CD8-positive, alpha-beta T cell (primary cell): ENCODE measurements at regions of chr1 and their contacts with region 1.

Region 1: GRCh38 chr1:235971571-235972310 is 93.1 kb downstream of the NID1 start:
- DNase-seq: peak; percentile 81 to 93 (median 89)
- ATAC-seq: peak; percentile 99
- H3K4me3 ChIP-seq: peak overlapping the region; percentile 20 to 46
- H3K4me3 Mint-ChIP-seq: peak overlapping the region; percentile 78
- H3K27ac ChIP-seq: peak overlapping the region; percentile 53 to 54
- H3K27ac Mint-ChIP-seq: peak overlapping the region; percentile 99
- H3K4me1 ChIP-seq: peaks cover 7% of the 10 kb centered on the region
- H3K4me1 Mint-ChIP-seq: peaks cover 16% of the 10 kb centered on the region
- H3K27me3 ChIP-seq: no peaks in the 10 kb centered on the region
- H3K27me3 Mint-ChIP-seq: no peaks in the 10 kb centered on the region
- CTCF ChIP-seq: peak; percentile 82

Region 2: GRCh38 chr1:235739124-235739523 is 232.6 kb before region 1 on chr1:
- CTCF ChIA-PET with region 1: interaction called, 4 read pairs
- POLR2A ChIA-PET with region 1: no interaction called
- intact Hi-C with region 1: loop called in 1 of 2 experiments (anchors 10 kb)
- DNase-seq: no peak
- ATAC-seq: no peak
- H3K4me3 ChIP-seq: no peak overlapping the region
- H3K4me3 Mint-ChIP-seq: no peak overlapping the region
- H3K27ac ChIP-seq: no peak overlapping the region
- H3K27ac Mint-ChIP-seq: no peak overlapping the region
- H3K4me1 ChIP-seq: no peaks in the 10 kb centered on the region
- H3K4me1 Mint-ChIP-seq: peaks cover 2% of the 10 kb centered on the region
- H3K27me3 ChIP-seq: no peaks in the 10 kb centered on the region
- H3K27me3 Mint-ChIP-seq: no peaks in the 10 kb centered on the region
- CTCF ChIP-seq: no peak

Region 3: GRCh38 chr1:235821361-235821981 is 150.3 kb before region 1 on chr1:
- CTCF ChIA-PET with region 1: interaction called, 11 read pairs
- POLR2A ChIA-PET with region 1: no interaction called
- intact Hi-C with region 1: no loop called
- DNase-seq: no peak
- ATAC-seq: no peak
- H3K4me3 ChIP-seq: no peak overlapping the region
- H3K4me3 Mint-ChIP-seq: no peak overlapping the region
- H3K27ac ChIP-seq: no peak overlapping the region
- H3K27ac Mint-ChIP-seq: no peak overlapping the region
- H3K4me1 ChIP-seq: no peaks in the 10 kb centered on the region
- H3K4me1 Mint-ChIP-seq: peaks cover 5% of the 10 kb centered on the region
- H3K27me3 ChIP-seq: no peaks in the 10 kb centered on the region
- H3K27me3 Mint-ChIP-seq: no peaks in the 10 kb centered on the region
- CTCF ChIP-seq: no peak

Region 4: GRCh38 chr1:235855811-235856429 is 115.8 kb before region 1 on chr1:
- CTCF ChIA-PET with region 1: interaction called, 10 read pairs
- POLR2A ChIA-PET with region 1: no interaction called
- intact Hi-C with region 1: no loop called
- DNase-seq: peak in 1 of 9 experiments; percentile 41
- ATAC-seq: peak; percentile 54
- H3K4me3 ChIP-seq: no peak overlapping the region
- H3K4me3 Mint-ChIP-seq: peak overlapping the region; percentile 20
- H3K27ac ChIP-seq: peak overlapping the region in 1 of 2 experiments; percentile 40
- H3K27ac Mint-ChIP-seq: peak overlapping the region; percentile 24
- H3K4me1 ChIP-seq: peaks cover 18% of the 10 kb centered on the region
- H3K4me1 Mint-ChIP-seq: peaks cover 51% of the 10 kb centered on the region
- H3K27me3 ChIP-seq: no peaks in the 10 kb centered on the region
- H3K27me3 Mint-ChIP-seq: no peaks in the 10 kb centered on the region
- CTCF ChIP-seq: no peak

Region 5: GRCh38 chr1:235923466-235924021 is 48.2 kb before region 1 on chr1:
- CTCF ChIA-PET with region 1: interaction called, 10 read pairs
- POLR2A ChIA-PET with region 1: no interaction called
- intact Hi-C with region 1: loop called in 1 of 2 experiments (anchors 2 kb)
- DNase-seq: peak in 8 of 9 experiments; percentile 8 to 62 (median 34)
- ATAC-seq: peak; percentile 74
- H3K4me3 ChIP-seq: no peak overlapping the region
- H3K4me3 Mint-ChIP-seq: no peak overlapping the region
- H3K27ac ChIP-seq: peak overlapping the region in 1 of 2 experiments; percentile 64
- H3K27ac Mint-ChIP-seq: peak overlapping the region; percentile 87
- H3K4me1 ChIP-seq: peaks cover 13% of the 10 kb centered on the region
- H3K4me1 Mint-ChIP-seq: peaks cover 26% of the 10 kb centered on the region
- H3K27me3 ChIP-seq: no peaks in the 10 kb centered on the region
- H3K27me3 Mint-ChIP-seq: no peaks in the 10 kb centered on the region
- CTCF ChIP-seq: no peak

Region 6: GRCh38 chr1:235999259-235999925 is 27.7 kb after region 1 on chr1:
- CTCF ChIA-PET with region 1: interaction called, 9 read pairs
- POLR2A ChIA-PET with region 1: interaction called, 5 read pairs
- intact Hi-C with region 1: loop called in 1 of 2 experiments (anchors 1 kb)
- DNase-seq: peak; percentile 22 to 93 (median 69)
- ATAC-seq: peak; percentile 79
- H3K4me3 ChIP-seq: no peak overlapping the region
- H3K4me3 Mint-ChIP-seq: peak overlapping the region; percentile 60
- H3K27ac ChIP-seq: peak overlapping the region; percentile 42 to 96
- H3K27ac Mint-ChIP-seq: peak overlapping the region; percentile 94
- H3K4me1 ChIP-seq: peaks cover 18% of the 10 kb centered on the region
- H3K4me1 Mint-ChIP-seq: peaks cover 29% of the 10 kb centered on the region
- H3K27me3 ChIP-seq: no peaks in the 10 kb centered on the region
- H3K27me3 Mint-ChIP-seq: no peaks in the 10 kb centered on the region
- CTCF ChIP-seq: no peak